ENCODE measurements at regions of chr15 and their contacts with region 1.

Region 1: GRCh38 chr15:82919231-82919886 is 33.2 kb downstream of the HOMER2 start:
- DNase-seq: peak; percentile 96
- ATAC-seq: peak; percentile 96
- H3K4me3 ChIP-seq: peak overlapping the region in 1 of 3 experiments; percentile 43; a peak in 1 of 6 replicates
- H3K27ac ChIP-seq: peak overlapping the region; percentile 71
- H3K4me1 ChIP-seq: peaks cover 69% of the 10 kb centered on the region
- H3K27me3 ChIP-seq: no peaks in the 10 kb centered on the region
- CTCF ChIP-seq: no peak
- EP300 ChIP-seq: peak in 1 of 2 experiments; percentile 45; a peak in 1 of 4 replicates
- POLR2A ChIP-seq: no peak
- RAD21 ChIP-seq: no peak

Region 2: GRCh38 chr15:82737975-82738374 is 181.4 kb before region 1 on chr15:
- CTCF ChIA-PET with region 1: no interaction called
- POLR2A ChIA-PET with region 1: no interaction called
- in situ Hi-C with region 1: no loop called
- intact Hi-C with region 1: no loop called
- DNase-seq: no peak
- ATAC-seq: no peak
- H3K4me3 ChIP-seq: no peak overlapping the region
- H3K27ac ChIP-seq: no peak overlapping the region
- H3K4me1 ChIP-seq: no peaks in the 10 kb centered on the region
- H3K27me3 ChIP-seq: no peaks in the 10 kb centered on the region
- CTCF ChIP-seq: no peak
- EP300 ChIP-seq: no peak
- POLR2A ChIP-seq: no peak
- RAD21 ChIP-seq: no peak

Region 3: GRCh38 chr15:82855286-82856100 is 63.9 kb before region 1 on chr15:
- CTCF ChIA-PET with region 1: no interaction called
- POLR2A ChIA-PET with region 1: interaction called, 10 read pairs
- in situ Hi-C with region 1: loop called (anchors 5 kb)
- intact Hi-C with region 1: loop called (anchors 5 kb)
- DNase-seq: no peak
- ATAC-seq: no peak
- H3K4me3 ChIP-seq: no peak overlapping the region
- H3K27ac ChIP-seq: peak overlapping the region; percentile 42
- H3K4me1 ChIP-seq: peaks cover 27% of the 10 kb centered on the region
- H3K27me3 ChIP-seq: no peaks in the 10 kb centered on the region; a peak in 1 of 5 replicates
- CTCF ChIP-seq: no peak
- EP300 ChIP-seq: no peak
- POLR2A ChIP-seq: no peak
- RAD21 ChIP-seq: no peak

Region 4: GRCh38 chr15:82900511-82901060 is 18.8 kb before region 1 on chr15:
- CTCF ChIA-PET with region 1: no interaction called
- POLR2A ChIA-PET with region 1: no interaction called
- in situ Hi-C with region 1: no loop called
- intact Hi-C with region 1: loop called (anchors 1 kb)
- DNase-seq: no peak
- ATAC-seq: no peak
- H3K4me3 ChIP-seq: no peak overlapping the region
- H3K27ac ChIP-seq: no peak overlapping the region
- H3K4me1 ChIP-seq: peaks cover 25% of the 10 kb centered on the region
- H3K27me3 ChIP-seq: no peaks in the 10 kb centered on the region; a peak in 1 of 5 replicates
- CTCF ChIP-seq: no peak
- EP300 ChIP-seq: no peak
- POLR2A ChIP-seq: no peak
- RAD21 ChIP-seq: no peak

Region 5: GRCh38 chr15:82952158-82953081 is 33.1 kb after region 1 on chr15 and contains the start of gene HOMER2:
- CTCF ChIA-PET with region 1: no interaction called
- POLR2A ChIA-PET with region 1: no interaction called
- in situ Hi-C with region 1: no loop called
- intact Hi-C with region 1: loop called (anchors 5 kb)
- DNase-seq: peak; percentile 10
- ATAC-seq: peak; percentile 78
- H3K4me3 ChIP-seq: peak within 1 kb of the TSS; percentile 70 to 83 (median 78)
- H3K27ac ChIP-seq: no peak within 1 kb of the TSS
- H3K4me1 ChIP-seq: peaks cover 22% of the 10 kb centered on the region
- H3K27me3 ChIP-seq: peaks cover 4 to 5% of the 10 kb centered on the region in 2 experiments; a peak in 4 of 5 replicates
- CTCF ChIP-seq: no peak
- EP300 ChIP-seq: no peak
- POLR2A ChIP-seq: no peak
- RAD21 ChIP-seq: no peak
- total RNA-seq, gene HOMER2: 13.3 and 14.1 TPM in 2 replicates

Region 6: GRCh38 chr15:83230258-83230657 is 310.9 kb after region 1 on chr15:
- CTCF ChIA-PET with region 1: no interaction called
- POLR2A ChIA-PET with region 1: no interaction called
- in situ Hi-C with region 1: no loop called
- intact Hi-C with region 1: no loop called
- DNase-seq: no peak
- ATAC-seq: no peak
- H3K4me3 ChIP-seq: no peak overlapping the region
- H3K27ac ChIP-seq: no peak overlapping the region
- H3K4me1 ChIP-seq: no peaks in the 10 kb centered on the region
- H3K27me3 ChIP-seq: no peaks in the 10 kb centered on the region
- CTCF ChIP-seq: no peak
- EP300 ChIP-seq: no peak
- POLR2A ChIP-seq: no peak
- RAD21 ChIP-seq: no peak

Measured in HepG2 (cell line).